ENCODE measurements at regions of chr5 and their contacts with region 1.

Region 1: DNA sequence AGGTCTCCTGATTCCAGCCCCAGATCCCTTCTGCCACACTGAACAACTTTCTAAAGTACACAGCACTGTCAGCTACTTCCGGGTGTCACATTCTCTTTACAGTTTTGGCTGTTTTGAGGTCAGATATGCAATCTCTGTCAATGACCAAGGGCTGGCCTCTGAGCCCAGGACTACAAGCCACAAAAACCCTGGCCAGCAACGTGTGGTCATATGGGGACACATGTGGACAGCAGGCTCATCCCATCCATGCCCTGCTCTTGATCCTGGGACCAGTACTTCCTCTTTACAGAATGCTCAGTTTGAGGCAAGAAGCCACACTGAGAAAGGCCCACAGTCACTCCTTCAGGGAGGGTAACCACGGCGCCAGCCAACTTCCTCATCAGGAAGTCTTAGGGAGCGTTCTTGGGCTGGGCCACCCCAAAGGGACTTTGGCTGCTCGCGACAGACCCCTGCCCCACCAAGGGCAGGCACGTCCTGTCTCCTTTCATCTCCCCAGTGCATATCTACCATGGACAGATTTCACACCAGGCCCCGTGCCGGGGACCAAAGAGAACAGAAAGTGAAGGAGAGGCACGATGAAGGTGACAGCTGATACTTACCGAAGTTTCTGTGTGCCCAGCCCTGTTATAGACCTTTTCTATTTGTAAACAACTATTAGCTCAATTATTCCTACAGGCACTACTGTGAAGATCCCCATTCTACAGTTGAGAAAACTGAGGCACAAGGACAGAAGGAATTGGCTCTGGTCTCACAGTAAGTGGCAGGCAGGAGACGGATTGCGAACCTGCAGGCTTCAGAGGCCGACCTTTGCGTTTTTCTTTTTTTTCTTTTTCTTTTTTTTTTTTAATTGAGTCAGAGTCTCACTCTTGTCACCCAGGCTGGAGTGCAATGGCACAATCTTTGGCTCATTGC is 37.3 kb downstream of the STK10 start:
- DNase-seq: peak in 5 of 9 donors; percentile 16 to 33 (median 24)
- ATAC-seq: peak; percentile 83
- H3K4me3 ChIP-seq: peak overlapping the region; percentile 15
- H3K4me3 Mint-ChIP-seq: peak overlapping the region; percentile 41 to 84 (median 75)
- H3K27ac ChIP-seq: peak overlapping the region; percentile 73
- H3K27ac Mint-ChIP-seq: peak overlapping the region; percentile 84 to 95 (median 91)
- H3K4me1 ChIP-seq: peaks cover 40 to 78% of the 10 kb centered on the region in 2 donors
- H3K4me1 Mint-ChIP-seq: peaks cover 55 to 88% (median 75%) of the 10 kb centered on the region in 7 donors
- H3K27me3 ChIP-seq: no peaks in the 10 kb centered on the region
- H3K27me3 Mint-ChIP-seq: no peaks in the 10 kb centered on the region

Region 2: GRCh38 chr5:171965745-171966144 is 185.0 kb before region 1 on chr5:
- CTCF ChIA-PET with region 1: no interaction called
- POLR2A ChIA-PET with region 1: no interaction called
- intact Hi-C with region 1: no loop called
- DNase-seq: no peak
- ATAC-seq: peak; percentile 49
- H3K4me3 ChIP-seq: no peak overlapping the region
- H3K4me3 Mint-ChIP-seq: peak overlapping the region in 4 of 10 donors; percentile 3 to 30 (median 24)
- H3K27ac ChIP-seq: no peak overlapping the region
- H3K27ac Mint-ChIP-seq: peak overlapping the region in 1 of 9 donors; percentile 57
- H3K4me1 ChIP-seq: peaks cover 12 to 28% of the 10 kb centered on the region in 2 donors
- H3K4me1 Mint-ChIP-seq: peaks cover 35 to 86% (median 71%) of the 10 kb centered on the region in 7 donors
- H3K27me3 ChIP-seq: no peaks in the 10 kb centered on the region
- H3K27me3 Mint-ChIP-seq: no peaks in the 10 kb centered on the region

Region 3: GRCh38 chr5:172106511-172107356 is 44.0 kb before region 1 on chr5:
- CTCF ChIA-PET with region 1: interaction called, 4 read pairs
- POLR2A ChIA-PET with region 1: no interaction called
- intact Hi-C with region 1: loop called in 1 of 2 experiments (anchors 2 kb)
- DNase-seq: peak; percentile 31 to 78 (median 59)
- ATAC-seq: peak; percentile 43
- H3K4me3 ChIP-seq: no peak overlapping the region
- H3K4me3 Mint-ChIP-seq: peak overlapping the region in 8 of 10 donors; percentile 20 to 49 (median 39)
- H3K27ac ChIP-seq: peak overlapping the region; percentile 24
- H3K27ac Mint-ChIP-seq: peak overlapping the region; percentile 18 to 88 (median 81)
- H3K4me1 ChIP-seq: peaks cover 31 to 37% of the 10 kb centered on the region in 2 donors
- H3K4me1 Mint-ChIP-seq: peaks cover 23 to 61% (median 43%) of the 10 kb centered on the region in 7 donors
- H3K27me3 ChIP-seq: no peaks in the 10 kb centered on the region
- H3K27me3 Mint-ChIP-seq: no peaks in the 10 kb centered on the region

Region 4: DNA sequence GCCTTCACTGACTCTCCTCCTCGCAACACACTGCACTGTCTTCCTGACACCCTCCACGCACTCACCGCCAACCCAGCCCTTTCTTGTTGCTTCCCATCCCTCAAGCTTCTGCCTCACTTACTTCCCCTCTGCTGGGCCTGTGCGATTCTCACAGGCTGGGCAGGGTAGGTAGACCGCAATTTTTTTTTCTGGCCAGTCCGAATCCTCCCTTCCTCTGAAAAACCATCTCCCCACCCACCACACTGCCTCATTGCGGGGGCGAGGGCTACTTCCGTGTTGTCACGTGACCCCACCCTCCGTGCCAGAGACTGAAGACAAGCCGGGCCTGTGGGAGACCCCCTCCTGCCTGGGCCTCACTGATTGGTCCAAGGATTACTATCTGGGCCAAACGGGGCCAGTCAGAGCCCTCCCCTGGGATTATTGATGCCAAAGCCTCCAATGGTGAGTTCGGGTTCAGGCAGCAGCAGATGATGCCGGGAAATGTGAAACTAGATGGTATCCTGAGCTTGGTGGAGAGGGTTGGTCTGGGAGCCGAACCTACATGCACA is 35.8 kb before region 1 on chr5:
- CTCF ChIA-PET with region 1: interaction called, 6 read pairs
- POLR2A ChIA-PET with region 1: interaction called, 3 read pairs
- intact Hi-C with region 1: loop called (anchors 2 kb)
- DNase-seq: peak; percentile 35 to 78 (median 44)
- ATAC-seq: peak; percentile 70
- H3K4me3 ChIP-seq: peak overlapping the region; percentile 50
- H3K4me3 Mint-ChIP-seq: peak overlapping the region; percentile 54 to 90 (median 80)
- H3K27ac ChIP-seq: peak overlapping the region; percentile 70
- H3K27ac Mint-ChIP-seq: peak overlapping the region; percentile 75 to 98 (median 94)
- H3K4me1 ChIP-seq: peaks cover 67 to 80% of the 10 kb centered on the region in 2 donors
- H3K4me1 Mint-ChIP-seq: peaks cover 48 to 86% (median 72%) of the 10 kb centered on the region in 7 donors
- H3K27me3 ChIP-seq: no peaks in the 10 kb centered on the region
- H3K27me3 Mint-ChIP-seq: no peaks in the 10 kb centered on the region

Region 5: GRCh38 chr5:172173831-172174153 is 23.0 kb after region 1 on chr5:
- CTCF ChIA-PET with region 1: interaction called, 5 read pairs
- POLR2A ChIA-PET with region 1: interaction called, 37 read pairs
- intact Hi-C with region 1: loop called (anchors 1 to 2 kb)
- DNase-seq: peak in 6 of 9 donors; percentile 19 to 79 (median 28)
- ATAC-seq: peak; percentile 32
- H3K4me3 ChIP-seq: peak overlapping the region; percentile 58
- H3K4me3 Mint-ChIP-seq: peak overlapping the region; percentile 87 to 99 (median 94)
- H3K27ac ChIP-seq: peak overlapping the region; percentile 92
- H3K27ac Mint-ChIP-seq: peak overlapping the region; percentile 94 to 100 (median 98)
- H3K4me1 ChIP-seq: peaks cover 77 to 83% of the 10 kb centered on the region in 2 donors
- H3K4me1 Mint-ChIP-seq: peaks cover 76 to 99% (median 93%) of the 10 kb centered on the region in 7 donors
- H3K27me3 ChIP-seq: no peaks in the 10 kb centered on the region
- H3K27me3 Mint-ChIP-seq: no peaks in the 10 kb centered on the region

Region 6: GRCh38 chr5:172293054-172293744 is 142.4 kb after region 1 on chr5:
- CTCF ChIA-PET with region 1: no interaction called
- POLR2A ChIA-PET with region 1: no interaction called
- intact Hi-C with region 1: no loop called
- DNase-seq: peak; percentile 20 to 77 (median 67)
- ATAC-seq: peak; percentile 100
- H3K4me3 ChIP-seq: no peak overlapping the region
- H3K4me3 Mint-ChIP-seq: no peak overlapping the region
- H3K27ac ChIP-seq: no peak overlapping the region
- H3K27ac Mint-ChIP-seq: peak overlapping the region in 1 of 9 donors; percentile 43
- H3K4me1 ChIP-seq: no peaks in the 10 kb centered on the region
- H3K4me1 Mint-ChIP-seq: peaks cover 0 to 4% (median 2%) of the 10 kb centered on the region in 7 donors
- H3K27me3 ChIP-seq: no peaks in the 10 kb centered on the region
- H3K27me3 Mint-ChIP-seq: peaks cover 0 to 12% (median 0%) of the 10 kb centered on the region in 5 donors

Region 7: GRCh38 chr5:172502969-172503368 is 352.2 kb after region 1 on chr5:
- CTCF ChIA-PET with region 1: no interaction called
- POLR2A ChIA-PET with region 1: no interaction called
- intact Hi-C with region 1: no loop called
- DNase-seq: peak in 1 of 9 donors; percentile 15
- ATAC-seq: no peak
- H3K4me3 ChIP-seq: no peak overlapping the region
- H3K4me3 Mint-ChIP-seq: no peak overlapping the region
- H3K27ac ChIP-seq: no peak overlapping the region
- H3K27ac Mint-ChIP-seq: no peak overlapping the region
- H3K4me1 ChIP-seq: no peaks in the 10 kb centered on the region
- H3K4me1 Mint-ChIP-seq: no peaks in the 10 kb centered on the region
- H3K27me3 ChIP-seq: no peaks in the 10 kb centered on the region
- H3K27me3 Mint-ChIP-seq: peaks cover 3 to 23% (median 16%) of the 10 kb centered on the region in 5 donors